ENCODE measurements at regions of chr14 and their contacts with region 1.

Region 1: GRCh38 chr14:89040460-89041259 is 216.2 kb downstream of the TTC8 start:
- DNase-seq: peak; percentile 86
- ATAC-seq: peak; percentile 95
- H3K4me3 ChIP-seq: peak overlapping the region; percentile 38
- H3K27ac ChIP-seq: peak overlapping the region; percentile 80
- H3K4me1 ChIP-seq: peaks cover 3% of the 10 kb centered on the region; the same call in 1 of the 2 replicates
- H3K27me3 ChIP-seq: no peaks in the 10 kb centered on the region
- CTCF ChIP-seq: peak; percentile 92
- POLR2A ChIP-seq: peak; percentile 74; the same call in 1 of the 2 replicates
- RAD21 ChIP-seq: peak; percentile 87

Region 2: DNA sequence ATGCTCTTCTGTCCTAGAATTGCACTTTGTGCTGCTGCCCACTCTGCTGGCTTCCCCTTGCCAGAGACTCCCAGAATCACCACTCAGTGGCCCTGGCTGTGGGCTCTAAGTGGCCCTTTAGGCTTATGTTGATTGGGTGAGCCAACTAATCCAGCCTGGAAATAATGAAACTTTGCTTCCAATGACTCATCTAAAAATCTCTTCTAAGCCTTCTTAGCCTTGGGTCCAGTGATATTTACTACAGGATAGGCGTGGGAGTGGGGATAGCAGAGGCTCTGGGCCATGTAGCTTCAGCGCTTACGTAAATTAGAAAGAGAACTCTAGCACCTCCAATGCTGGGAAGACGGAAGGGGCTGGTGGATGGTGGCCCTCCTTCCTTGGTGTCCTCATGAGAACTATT is 78.3 kb before region 1 on chr14:
- CTCF ChIA-PET with region 1: no interaction called
- POLR2A ChIA-PET with region 1: no interaction called
- dilution Hi-C with region 1: no loop called
- in situ Hi-C with region 1: no loop called
- intact Hi-C with region 1: no loop called
- DNase-seq: no peak
- ATAC-seq: no peak
- H3K4me3 ChIP-seq: no peak overlapping the region
- H3K27ac ChIP-seq: no peak overlapping the region
- H3K4me1 ChIP-seq: no peaks in the 10 kb centered on the region
- H3K27me3 ChIP-seq: peaks cover 8% of the 10 kb centered on the region
- CTCF ChIP-seq: no peak
- POLR2A ChIP-seq: no peak
- RAD21 ChIP-seq: no peak

Region 3: DNA sequence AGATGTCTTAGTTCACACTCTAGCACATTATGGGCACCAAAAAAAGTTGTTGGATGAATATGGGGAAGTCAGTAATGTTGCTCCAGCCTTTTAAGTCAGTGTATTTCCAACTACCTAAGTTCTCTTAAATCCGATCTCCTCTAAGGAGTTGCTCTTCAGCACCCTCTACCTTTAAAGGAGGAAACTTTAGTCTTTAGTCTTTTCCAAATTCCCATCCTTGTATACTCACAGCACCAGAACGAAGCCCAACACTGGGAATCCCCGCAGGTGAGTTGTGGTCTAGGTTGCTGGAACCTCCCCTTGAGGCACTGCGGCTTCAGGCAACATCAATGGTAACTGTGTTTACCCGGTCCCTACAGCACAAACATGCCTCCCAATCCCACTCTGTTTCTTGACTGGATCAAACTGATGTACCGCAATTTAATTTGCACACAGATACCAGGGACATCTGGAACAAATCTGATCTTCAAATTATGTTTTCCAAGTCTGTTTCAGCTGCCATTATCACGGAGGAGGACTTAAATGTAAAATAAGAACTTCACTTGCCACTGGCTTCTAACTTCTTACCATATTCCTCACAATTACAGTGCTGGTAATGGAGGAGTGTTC is 197.4 kb after region 1 on chr14:
- CTCF ChIA-PET with region 1: no interaction called
- POLR2A ChIA-PET with region 1: interaction called, 4 read pairs
- dilution Hi-C with region 1: no loop called
- in situ Hi-C with region 1: no loop called
- intact Hi-C with region 1: loop called (anchors 10 kb)
- DNase-seq: peak; percentile 19
- ATAC-seq: 0 out of 2 replicates have a peak, but pooled peaks have one; percentile 51
- H3K4me3 ChIP-seq: no peak overlapping the region
- H3K27ac ChIP-seq: no peak overlapping the region
- H3K4me1 ChIP-seq: peaks cover 3% of the 10 kb centered on the region; the same call in 1 of the 2 replicates
- H3K27me3 ChIP-seq: no peaks in the 10 kb centered on the region
- CTCF ChIP-seq: peak; percentile 33
- POLR2A ChIP-seq: no peak
- RAD21 ChIP-seq: peak; percentile 39

Region 4: GRCh38 chr14:89365061-89365801 is 324.6 kb after region 1 on chr14:
- CTCF ChIA-PET with region 1: no interaction called
- POLR2A ChIA-PET with region 1: no interaction called
- dilution Hi-C with region 1: no loop called
- in situ Hi-C with region 1: no loop called
- intact Hi-C with region 1: no loop called
- DNase-seq: peak; percentile 59
- ATAC-seq: peak; percentile 53
- H3K4me3 ChIP-seq: no peak overlapping the region
- H3K27ac ChIP-seq: no peak overlapping the region
- H3K4me1 ChIP-seq: peaks cover 6% of the 10 kb centered on the region
- H3K27me3 ChIP-seq: no peaks in the 10 kb centered on the region
- CTCF ChIP-seq: no peak
- POLR2A ChIP-seq: no peak
- RAD21 ChIP-seq: no peak

Region 5: GRCh38 chr14:89409961-89410360 is 369.3 kb after region 1 on chr14:
- CTCF ChIA-PET with region 1: interaction called, 6 read pairs
- POLR2A ChIA-PET with region 1: no interaction called
- dilution Hi-C with region 1: no loop called
- in situ Hi-C with region 1: loop called (anchors 5 kb)
- intact Hi-C with region 1: no loop called
- DNase-seq: no peak
- ATAC-seq: no peak
- H3K4me3 ChIP-seq: no peak overlapping the region
- H3K27ac ChIP-seq: no peak overlapping the region
- H3K4me1 ChIP-seq: peaks cover 10% of the 10 kb centered on the region
- H3K27me3 ChIP-seq: no peaks in the 10 kb centered on the region
- CTCF ChIP-seq: no peak
- POLR2A ChIP-seq: no peak
- RAD21 ChIP-seq: no peak

Region 6: DNA sequence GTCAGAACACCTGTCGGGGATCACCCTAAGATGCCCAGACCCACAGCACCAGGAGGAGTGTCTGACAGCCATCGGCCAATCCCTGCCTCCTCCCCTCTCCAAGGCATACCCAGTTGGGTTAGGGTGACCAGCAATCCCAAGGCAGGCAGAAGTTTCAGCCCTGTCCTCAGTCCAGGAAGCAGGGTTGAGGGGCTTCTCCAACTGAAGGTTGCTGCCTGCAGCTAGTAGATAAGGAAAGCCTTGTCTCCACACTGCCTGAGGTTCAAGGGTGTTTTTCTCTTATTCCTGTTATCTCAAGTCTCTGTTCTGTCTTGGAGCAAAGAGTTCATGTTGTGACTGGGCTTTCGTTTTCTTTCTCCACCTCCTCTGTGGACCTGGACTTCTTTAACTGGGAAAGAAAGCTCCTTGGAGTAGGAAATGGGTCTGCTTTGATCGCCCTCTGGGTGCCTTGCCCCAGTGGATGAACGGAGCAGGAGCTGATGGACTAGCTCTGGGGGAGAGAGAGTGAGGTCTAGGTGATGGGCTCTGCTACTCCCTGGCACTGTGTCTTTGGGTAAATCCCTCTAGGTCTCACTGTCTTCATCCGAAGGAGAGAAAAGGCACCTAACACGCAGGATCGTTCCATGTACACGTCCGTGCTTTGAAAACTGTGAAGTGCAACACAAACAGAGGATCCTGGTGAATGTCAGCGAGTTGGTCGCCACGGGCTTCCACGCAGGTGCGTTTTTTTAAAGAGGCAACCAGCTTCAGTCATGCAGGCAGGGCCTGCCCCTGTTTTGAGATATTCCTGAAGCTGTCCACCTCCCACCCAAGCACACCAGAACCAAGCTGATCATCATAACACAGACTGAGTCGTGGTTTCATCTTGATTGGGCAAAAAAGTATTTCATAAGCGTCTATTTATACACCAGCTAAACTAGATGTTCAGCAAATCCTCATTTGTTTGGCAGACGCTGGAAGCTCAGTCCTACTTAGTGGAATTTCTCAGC is 428.8 kb after region 1 on chr14:
- CTCF ChIA-PET with region 1: no interaction called
- POLR2A ChIA-PET with region 1: no interaction called
- dilution Hi-C with region 1: no loop called
- in situ Hi-C with region 1: no loop called
- intact Hi-C with region 1: no loop called
- DNase-seq: peak; percentile 50
- ATAC-seq: peak; percentile 48
- H3K4me3 ChIP-seq: no peak overlapping the region
- H3K27ac ChIP-seq: no peak overlapping the region
- H3K4me1 ChIP-seq: peaks cover 2% of the 10 kb centered on the region
- H3K27me3 ChIP-seq: no peaks in the 10 kb centered on the region
- CTCF ChIP-seq: no peak
- POLR2A ChIP-seq: no peak
- RAD21 ChIP-seq: no peak

Region 7: GRCh38 chr14:89493877-89494634 is 453.4 kb after region 1 on chr14:
- CTCF ChIA-PET with region 1: no interaction called
- POLR2A ChIA-PET with region 1: no interaction called
- dilution Hi-C with region 1: no loop called
- in situ Hi-C with region 1: no loop called
- intact Hi-C with region 1: loop called (anchors 10 kb)
- DNase-seq: no peak
- ATAC-seq: no peak
- H3K4me3 ChIP-seq: no peak overlapping the region
- H3K27ac ChIP-seq: no peak overlapping the region
- H3K4me1 ChIP-seq: peaks cover 13% of the 10 kb centered on the region
- H3K27me3 ChIP-seq: no peaks in the 10 kb centered on the region
- CTCF ChIP-seq: no peak
- POLR2A ChIP-seq: no peak
- RAD21 ChIP-seq: no peak

Region 8: DNA sequence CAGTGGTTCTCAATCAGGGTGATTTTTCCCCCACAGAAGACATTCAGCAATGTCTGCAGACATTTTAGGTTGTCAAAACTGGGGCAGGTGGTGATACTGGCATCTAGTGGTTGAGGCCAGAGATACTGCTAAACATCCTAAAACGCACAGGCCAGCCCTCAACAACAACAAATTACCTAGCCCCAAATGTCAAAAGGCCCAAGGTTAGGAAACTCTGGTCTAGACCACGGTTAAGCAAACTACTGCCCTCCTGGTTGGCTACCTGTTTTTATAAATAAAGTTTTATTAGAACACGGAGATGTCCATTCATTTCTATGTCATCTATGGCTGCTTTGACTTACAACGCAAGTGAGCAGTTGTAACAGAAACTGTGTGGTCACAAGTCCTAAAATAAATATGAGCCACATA is 727.2 kb after region 1 on chr14:
- CTCF ChIA-PET with region 1: no interaction called
- POLR2A ChIA-PET with region 1: no interaction called
- dilution Hi-C with region 1: no loop called
- in situ Hi-C with region 1: loop called (anchors 25 kb)
- intact Hi-C with region 1: loop called (anchors 1 kb)
- DNase-seq: peak; percentile 63
- ATAC-seq: peak; percentile 54
- H3K4me3 ChIP-seq: no peak overlapping the region
- H3K27ac ChIP-seq: no peak overlapping the region
- H3K4me1 ChIP-seq: peaks cover 13% of the 10 kb centered on the region
- H3K27me3 ChIP-seq: no peaks in the 10 kb centered on the region
- CTCF ChIP-seq: peak; percentile 62
- POLR2A ChIP-seq: no peak
- RAD21 ChIP-seq: peak; percentile 88

Region 9: DNA sequence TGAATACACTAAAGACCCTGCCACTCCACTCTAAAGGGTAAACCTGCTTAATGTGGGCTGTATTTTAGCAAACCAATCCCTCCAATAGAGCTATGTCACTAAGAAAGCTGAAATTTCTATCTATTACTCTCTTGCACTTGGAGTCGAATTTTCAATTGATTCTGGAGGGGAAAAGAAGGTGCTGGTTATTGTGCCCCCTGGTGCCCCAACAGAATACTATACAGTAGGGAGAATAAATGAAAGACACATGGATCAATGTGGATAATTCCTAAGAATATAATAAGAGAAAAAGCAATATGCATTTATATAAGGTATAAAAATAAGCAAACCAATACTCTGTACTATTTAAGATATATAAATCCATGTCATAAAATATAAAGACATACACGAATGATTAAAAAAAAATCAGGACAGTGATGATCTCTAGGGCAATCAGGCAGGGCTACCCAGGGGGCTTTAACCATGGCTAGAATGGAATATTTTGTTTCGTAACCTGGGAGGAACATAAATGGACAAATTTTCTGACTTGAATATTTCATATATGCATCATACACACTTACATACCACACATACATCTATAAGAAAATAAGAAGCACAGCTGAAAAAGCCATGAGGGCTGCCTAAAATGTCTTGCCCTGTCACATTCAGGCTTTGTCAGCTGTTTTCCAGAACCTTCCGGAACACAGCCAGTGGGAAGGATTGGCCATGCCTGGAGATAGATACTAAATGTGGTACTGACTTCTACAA is 859.4 kb after region 1 on chr14:
- CTCF ChIA-PET with region 1: no interaction called
- POLR2A ChIA-PET with region 1: no interaction called
- dilution Hi-C with region 1: no loop called
- in situ Hi-C with region 1: no loop called
- intact Hi-C with region 1: loop called (anchors 1 kb)
- DNase-seq: peak; percentile 49
- ATAC-seq: peak; percentile 49
- H3K4me3 ChIP-seq: peak overlapping the region; percentile 11; the same call in 1 of the 2 replicates
- H3K27ac ChIP-seq: peak overlapping the region; percentile 100
- H3K4me1 ChIP-seq: peaks cover 9% of the 10 kb centered on the region
- H3K27me3 ChIP-seq: no peaks in the 10 kb centered on the region
- CTCF ChIP-seq: peak; percentile 56
- POLR2A ChIP-seq: no peak
- RAD21 ChIP-seq: peak; percentile 64

Region 10: GRCh38 chr14:89954070-89955028 is 913.7 kb after region 1 on chr14 and contains the start of gene EFCAB11:
- CTCF ChIA-PET with region 1: no interaction called
- POLR2A ChIA-PET with region 1: no interaction called
- dilution Hi-C with region 1: no loop called
- in situ Hi-C with region 1: no loop called
- intact Hi-C with region 1: loop called (anchors 1 kb)
- DNase-seq: peak; percentile 98
- ATAC-seq: peak; percentile 90
- H3K4me3 ChIP-seq: peak within 1 kb of the TSS; percentile 73
- H3K27ac ChIP-seq: peak within 1 kb of the TSS; percentile 59
- H3K4me1 ChIP-seq: peaks cover 3% of the 10 kb centered on the region; the same call in 1 of the 2 replicates
- H3K27me3 ChIP-seq: no peaks in the 10 kb centered on the region
- CTCF ChIP-seq: 0 out of 2 replicates have a peak, but pooled peaks have one; percentile 15
- POLR2A ChIP-seq: peak; percentile 78
- RAD21 ChIP-seq: no peak
- total RNA-seq, gene EFCAB11: 2.2 and 6.1 TPM in 2 replicates